MCF 10A (cell line): ENCODE measurements at regions of chr9 and their contacts with region 1.

Region 1: GRCh38 chr9:26656003-26656870 is 236.4 kb downstream of the CAAP1 start:
- DNase-seq: peak; percentile 57
- H3K4me3 Mint-ChIP-seq: no peak overlapping the region
- H3K27ac Mint-ChIP-seq: no peak overlapping the region
- H3K4me1 Mint-ChIP-seq: no peaks in the 10 kb centered on the region
- H3K27me3 Mint-ChIP-seq: peaks cover 71% of the 10 kb centered on the region
- CTCF ChIP-seq: peak; percentile 20

Region 2: GRCh38 chr9:25964239-25964638 is 692.0 kb before region 1 on chr9:
- CTCF ChIA-PET with region 1: interaction called, 4 read pairs
- POLR2A ChIA-PET with region 1: no interaction called
- intact Hi-C with region 1: loop called (anchors 1 kb)
- DNase-seq: peak; percentile 84
- H3K4me3 Mint-ChIP-seq: no peak overlapping the region
- H3K27ac Mint-ChIP-seq: no peak overlapping the region
- H3K4me1 Mint-ChIP-seq: no peaks in the 10 kb centered on the region
- H3K27me3 Mint-ChIP-seq: no peaks in the 10 kb centered on the region
- CTCF ChIP-seq: peak; percentile 52

Region 3: GRCh38 chr9:26669666-26670352 is 13.6 kb after region 1 on chr9:
- CTCF ChIA-PET with region 1: interaction called, 41 read pairs
- POLR2A ChIA-PET with region 1: no interaction called
- intact Hi-C with region 1: no loop called
- DNase-seq: no peak
- H3K4me3 Mint-ChIP-seq: no peak overlapping the region
- H3K27ac Mint-ChIP-seq: no peak overlapping the region
- H3K4me1 Mint-ChIP-seq: no peaks in the 10 kb centered on the region
- H3K27me3 Mint-ChIP-seq: peaks cover 65% of the 10 kb centered on the region
- CTCF ChIP-seq: no peak